GM10248 (cell line): ENCODE measurements at regions of chr10 and their contacts with region 1.

Region 1: GRCh38 chr10:30591249-30591670 is 38.3 kb downstream of the LYZL2 start:
- DNase-seq: peak; percentile 47
- CTCF ChIP-seq: peak; percentile 45

Region 2: DNA sequence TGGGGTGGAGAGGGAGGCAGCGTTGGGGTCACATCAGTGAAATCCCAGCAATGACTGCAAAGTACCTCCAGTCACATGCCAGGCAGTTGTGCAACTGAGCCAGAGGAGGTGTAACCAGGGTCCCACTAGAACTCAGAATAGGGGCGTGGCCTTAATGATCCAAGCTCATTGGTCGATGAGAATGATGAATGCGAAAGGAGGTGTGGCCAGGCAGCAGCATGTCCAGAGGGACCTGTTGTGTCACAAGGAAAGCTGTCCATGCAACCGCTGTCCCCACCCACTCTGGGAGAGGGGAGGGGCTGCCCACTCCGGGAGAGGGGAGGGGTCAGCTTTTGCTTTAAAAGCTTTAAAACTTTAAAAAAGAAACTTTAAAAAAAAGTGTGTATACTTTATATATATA is 216.9 kb before region 1 on chr10:
- CTCF ChIA-PET with region 1: interaction called, 17 read pairs
- POLR2A ChIA-PET with region 1: no interaction called
- DNase-seq: no peak
- CTCF ChIP-seq: no peak

Region 3: GRCh38 chr10:30413996-30414576 is 177.2 kb before region 1 on chr10:
- CTCF ChIA-PET with region 1: interaction called, 15 read pairs
- POLR2A ChIA-PET with region 1: no interaction called
- DNase-seq: peak; percentile 70
- CTCF ChIP-seq: peak; percentile 85

Region 4: DNA sequence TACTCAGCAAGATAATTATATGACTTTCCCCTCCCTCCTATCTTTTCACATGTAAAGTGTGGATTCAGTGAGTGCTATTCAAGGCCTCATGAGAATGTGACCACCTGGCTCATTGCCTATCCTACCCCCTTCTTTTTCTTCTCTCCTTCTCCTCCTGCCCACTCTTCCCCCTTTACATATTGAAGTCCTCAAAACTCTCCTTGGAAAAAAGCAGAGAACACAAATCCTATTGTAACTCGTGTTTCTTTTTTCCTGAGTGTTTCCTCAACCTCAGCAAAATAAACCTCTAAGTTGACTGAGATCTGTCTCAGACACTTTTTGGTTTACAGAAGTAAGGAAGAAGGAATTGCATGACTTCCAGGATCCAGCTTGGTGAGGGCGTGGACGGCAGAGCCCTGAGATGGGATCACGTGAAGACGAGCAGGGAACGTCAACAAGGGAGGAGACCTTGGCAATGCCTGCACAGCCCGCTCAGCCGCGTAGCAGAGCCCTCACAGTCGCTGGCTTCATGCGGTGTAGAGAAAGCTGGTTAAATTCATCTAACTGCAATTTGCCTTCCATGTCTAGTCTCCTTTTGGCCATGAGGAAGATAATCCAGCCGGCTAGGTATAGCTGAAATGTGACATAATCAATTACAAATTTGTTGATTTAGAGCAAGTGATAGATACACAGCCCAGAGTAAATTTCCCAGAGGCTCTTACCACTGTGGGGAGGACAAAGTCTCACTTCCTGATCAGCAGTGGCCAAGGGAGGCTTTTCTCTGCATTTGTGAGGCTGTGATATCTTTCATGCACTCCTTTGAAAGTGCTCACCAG is 37.4 kb before region 1 on chr10:
- CTCF ChIA-PET with region 1: interaction called, 13 read pairs
- POLR2A ChIA-PET with region 1: no interaction called
- DNase-seq: no peak
- CTCF ChIP-seq: no peak

Region 5: DNA sequence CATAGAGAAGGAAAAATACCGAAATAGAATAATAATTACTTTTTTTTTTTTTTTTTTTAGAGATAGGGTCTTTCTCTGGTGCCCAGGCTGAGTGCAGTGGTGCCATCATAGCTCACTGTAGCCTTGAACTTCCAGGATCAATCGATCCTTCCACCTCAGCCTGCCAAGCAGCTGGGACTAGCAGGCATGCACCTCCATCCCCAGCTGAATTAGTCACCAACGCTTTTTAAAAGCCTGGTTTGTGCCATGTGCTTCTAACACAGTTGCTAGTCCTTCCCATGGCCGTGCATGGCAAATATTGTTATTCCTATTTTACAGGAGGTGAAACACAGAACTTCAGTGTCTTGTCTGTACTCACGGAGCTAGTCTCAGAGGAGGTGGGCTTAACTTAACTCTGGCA is 15.1 kb after region 1 on chr10:
- CTCF ChIA-PET with region 1: interaction called, 25 read pairs
- POLR2A ChIA-PET with region 1: no interaction called
- DNase-seq: no peak
- CTCF ChIP-seq: no peak

Region 6: DNA sequence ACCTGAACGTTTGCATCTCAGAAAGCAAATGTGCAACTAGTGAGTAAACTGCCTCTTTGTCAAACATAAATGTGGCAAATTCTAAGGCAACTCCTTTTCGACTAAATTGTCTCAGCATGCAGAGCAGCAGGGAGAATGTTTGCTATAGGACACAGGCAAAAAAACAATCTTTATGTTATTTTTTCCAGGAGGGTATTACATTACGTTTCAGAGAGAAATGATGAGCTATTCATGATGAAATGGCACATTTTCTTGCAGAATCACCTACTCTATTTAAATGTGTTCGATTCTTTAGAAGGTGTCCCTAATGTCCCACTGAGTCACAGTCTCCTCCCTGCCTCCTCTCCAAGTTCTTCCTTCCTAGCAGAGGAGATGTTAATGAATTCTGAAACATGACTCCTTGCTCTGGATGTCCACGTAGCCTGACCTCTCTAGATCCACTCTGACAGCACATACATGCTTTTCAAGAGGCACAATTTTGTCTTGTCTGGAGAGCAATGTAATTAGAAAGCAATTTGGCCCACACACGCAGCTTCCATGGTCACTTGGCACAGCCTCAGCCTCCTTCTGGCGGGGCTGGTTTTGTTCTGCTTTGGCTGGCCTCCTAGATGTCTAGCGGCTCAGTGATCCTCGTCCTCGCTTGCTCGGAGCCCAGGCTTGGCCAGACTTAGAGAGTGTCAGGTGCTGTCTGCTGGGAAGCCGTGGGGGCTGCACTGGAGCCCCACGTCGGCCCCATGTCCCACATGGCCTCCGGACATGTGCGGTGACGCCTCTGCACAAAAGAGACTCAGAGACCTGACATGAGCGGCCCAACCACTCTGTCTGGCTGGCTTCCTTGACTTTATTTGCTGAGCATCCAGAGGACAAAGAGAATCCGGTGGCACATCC is 566.1 kb after region 1 on chr10:
- CTCF ChIA-PET with region 1: no interaction called
- POLR2A ChIA-PET with region 1: no interaction called
- DNase-seq: no peak
- CTCF ChIP-seq: no peak